Pancreas (tissue), 10 donors: ENCODE measurements at regions of chr16 and their contacts with region 1.

Region 1: GRCh38 chr16:74862741-74863244 is 88.2 kb upstream of the FA2H start:
- DNase-seq: peak in 1 of 6 donors; percentile 24
- ATAC-seq: peak; percentile 60 to 81 (median 76)
- H3K4me3 ChIP-seq: no peak overlapping the region
- H3K27ac ChIP-seq: no peak overlapping the region
- H3K4me1 ChIP-seq: no peaks in the 10 kb centered on the region
- H3K27me3 ChIP-seq: no peaks in the 10 kb centered on the region
- CTCF ChIP-seq: peak; percentile 41 to 75 (median 72)

Region 2: DNA sequence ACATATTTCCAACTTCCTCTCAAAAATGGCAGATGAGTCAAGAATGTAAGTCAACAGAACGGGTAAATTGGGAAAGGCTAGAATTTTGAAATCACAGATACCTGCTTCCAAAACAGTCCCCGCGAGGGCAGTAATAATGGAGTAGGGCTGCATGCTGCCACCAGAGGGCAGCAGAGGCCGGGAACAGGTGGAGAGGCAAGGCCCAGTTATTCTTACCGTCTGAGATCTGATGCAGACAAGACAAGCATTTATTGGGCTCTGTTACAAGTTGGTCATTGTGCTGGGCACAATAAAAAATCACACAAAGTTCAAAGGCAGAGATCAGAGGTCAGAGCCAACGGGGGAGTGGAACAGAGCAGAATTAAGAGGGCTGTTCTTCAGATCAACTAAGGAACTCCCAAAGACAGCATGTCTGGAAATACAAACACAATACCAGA is 153.3 kb before region 1 on chr16:
- intact Hi-C with region 1: loop called (anchors 5 to 10 kb)
- DNase-seq: peak; percentile 68 to 96 (median 86)
- ATAC-seq: peak; percentile 91 to 100 (median 98)
- H3K4me3 ChIP-seq: no peak overlapping the region
- H3K27ac ChIP-seq: no peak overlapping the region
- H3K4me1 ChIP-seq: no peaks in the 10 kb centered on the region
- H3K27me3 ChIP-seq: no peaks in the 10 kb centered on the region
- CTCF ChIP-seq: peak; percentile 91 to 94 (median 92)

Region 3: GRCh38 chr16:74718741-74719610 is 143.8 kb before region 1 on chr16:
- intact Hi-C with region 1: loop called in 2 of 3 experiments (anchors 10 kb)
- DNase-seq: peak in 1 of 6 donors; percentile 47
- ATAC-seq: no peak
- H3K4me3 ChIP-seq: no peak overlapping the region
- H3K27ac ChIP-seq: no peak overlapping the region
- H3K4me1 ChIP-seq: no peaks in the 10 kb centered on the region
- H3K27me3 ChIP-seq: no peaks in the 10 kb centered on the region
- CTCF ChIP-seq: no peak

Region 4: GRCh38 chr16:75110637-75111513 is 248.1 kb after region 1 on chr16:
- intact Hi-C with region 1: loop called in 1 of 3 experiments (anchors 10 kb)
- DNase-seq: peak; percentile 80 to 94 (median 89)
- ATAC-seq: peak; percentile 59 to 82 (median 78)
- H3K4me3 ChIP-seq: peak overlapping the region in 1 of 4 donors; percentile 1
- H3K27ac ChIP-seq: peak overlapping the region in 2 of 4 donors; percentile 33 to 67
- H3K4me1 ChIP-seq: peaks cover 19 to 39% (median 37%) of the 10 kb centered on the region in 3 donors
- H3K27me3 ChIP-seq: no peaks in the 10 kb centered on the region
- CTCF ChIP-seq: peak; percentile 78 to 91 (median 83)